Esophagus muscularis mucosa (tissue), 4 donors: ENCODE measurements at regions of chr17 and their contacts with region 1.

Region 1: DNA sequence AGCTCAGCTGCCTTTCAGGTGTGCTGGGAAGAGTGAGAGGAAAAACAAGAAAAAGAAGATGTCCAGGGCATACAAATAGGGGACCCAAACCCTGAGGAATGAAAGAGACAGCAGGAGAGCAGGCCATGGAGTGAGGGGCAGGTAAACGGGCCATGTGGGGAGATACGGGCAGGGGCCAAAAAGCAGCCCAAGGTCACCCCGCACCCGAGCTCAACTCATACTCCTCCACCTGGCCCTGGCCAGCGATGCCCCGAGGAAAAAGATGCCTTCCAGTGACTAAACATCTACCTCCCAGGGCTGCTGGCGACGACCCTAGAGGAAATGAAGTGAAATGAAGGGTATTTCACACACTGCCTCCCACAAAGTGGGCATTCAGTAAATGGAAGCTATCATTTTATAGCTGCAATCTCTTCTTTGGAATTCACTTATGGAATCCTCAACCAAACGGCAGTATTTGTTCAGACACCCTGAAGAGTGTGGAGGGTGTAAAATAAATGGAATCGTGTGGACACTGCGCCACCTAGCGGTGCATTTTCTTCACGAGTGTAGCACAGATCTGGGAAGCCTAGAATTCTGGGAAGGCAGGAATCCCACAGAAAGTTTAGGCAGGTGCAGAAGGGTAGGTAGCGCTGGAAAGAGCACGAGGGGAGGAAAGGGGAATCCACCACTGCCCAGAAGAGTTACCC is 14.9 kb downstream of the ELAC2 start:
- DNase-seq: peak; percentile 94
- H3K4me3 ChIP-seq: no peak overlapping the region
- H3K27ac ChIP-seq: no peak overlapping the region
- H3K4me1 ChIP-seq: peaks cover 3 to 20% (median 13%) of the 10 kb centered on the region in 4 donors
- H3K27me3 ChIP-seq: no peaks in the 10 kb centered on the region
- CTCF ChIP-seq: peak; percentile 79 to 80 (median 80)
- EP300 ChIP-seq: no peak
- POLR2A ChIP-seq: no peak

Region 2: DNA sequence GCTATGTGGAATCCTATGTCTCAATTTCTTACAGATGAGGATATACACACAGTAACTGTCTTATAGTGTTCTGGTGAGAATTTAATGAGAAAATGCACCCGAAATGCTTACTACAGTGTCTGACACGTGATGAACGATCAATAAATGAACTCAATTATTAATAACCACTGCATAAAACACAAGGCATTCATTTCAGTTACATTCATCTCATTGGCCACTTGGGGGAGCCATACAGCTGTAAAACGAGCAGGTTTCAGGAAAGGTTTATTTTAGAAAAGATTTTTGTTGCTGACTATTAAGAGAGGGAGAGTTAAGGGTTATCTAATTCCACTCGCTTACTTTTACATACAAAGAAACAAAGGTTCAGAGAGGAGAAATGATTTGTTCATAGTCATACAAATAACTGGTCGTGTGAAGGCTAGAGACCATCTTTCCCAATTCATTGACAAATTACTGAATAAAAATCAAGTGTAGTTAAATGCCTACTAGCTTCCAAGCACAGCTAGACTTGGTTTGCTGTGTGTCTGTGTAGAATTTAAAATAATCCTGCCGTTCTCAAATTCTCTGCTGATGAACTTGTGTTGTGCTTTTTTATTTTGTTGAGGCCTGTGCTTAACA is 822.2 kb before region 1 on chr17:
- intact Hi-C with region 1: loop called (anchors 5 kb)
- DNase-seq: no peak
- H3K4me3 ChIP-seq: peak overlapping the region in 1 of 4 donors; percentile 11
- H3K27ac ChIP-seq: peak overlapping the region; percentile 54 to 76 (median 67)
- H3K4me1 ChIP-seq: peaks cover 0 to 21% (median 7%) of the 10 kb centered on the region in 4 donors
- H3K27me3 ChIP-seq: no peaks in the 10 kb centered on the region
- CTCF ChIP-seq: peak; percentile 74 to 75 (median 74)
- EP300 ChIP-seq: no peak
- POLR2A ChIP-seq: no peak

Region 3: GRCh38 chr17:12545877-12546513 is 456.9 kb before region 1 on chr17:
- intact Hi-C with region 1: loop called (anchors 5 kb)
- DNase-seq: no peak
- H3K4me3 ChIP-seq: no peak overlapping the region
- H3K27ac ChIP-seq: no peak overlapping the region
- H3K4me1 ChIP-seq: peaks cover 0 to 12% (median 5%) of the 10 kb centered on the region in 4 donors
- H3K27me3 ChIP-seq: no peaks in the 10 kb centered on the region
- CTCF ChIP-seq: peak; percentile 67 to 81 (median 69)
- EP300 ChIP-seq: no peak
- POLR2A ChIP-seq: no peak

Region 4: GRCh38 chr17:12765548-12765947 is 237.4 kb before region 1 on chr17:
- intact Hi-C with region 1: loop called (anchors 10 kb)
- DNase-seq: no peak
- H3K4me3 ChIP-seq: no peak overlapping the region
- H3K27ac ChIP-seq: no peak overlapping the region
- H3K4me1 ChIP-seq: peaks cover 0 to 6% (median 0%) of the 10 kb centered on the region in 4 donors
- H3K27me3 ChIP-seq: no peaks in the 10 kb centered on the region
- CTCF ChIP-seq: no peak
- EP300 ChIP-seq: no peak
- POLR2A ChIP-seq: no peak